ENCODE measurements at regions of chr11 and their contacts with region 1.

Region 1: DNA sequence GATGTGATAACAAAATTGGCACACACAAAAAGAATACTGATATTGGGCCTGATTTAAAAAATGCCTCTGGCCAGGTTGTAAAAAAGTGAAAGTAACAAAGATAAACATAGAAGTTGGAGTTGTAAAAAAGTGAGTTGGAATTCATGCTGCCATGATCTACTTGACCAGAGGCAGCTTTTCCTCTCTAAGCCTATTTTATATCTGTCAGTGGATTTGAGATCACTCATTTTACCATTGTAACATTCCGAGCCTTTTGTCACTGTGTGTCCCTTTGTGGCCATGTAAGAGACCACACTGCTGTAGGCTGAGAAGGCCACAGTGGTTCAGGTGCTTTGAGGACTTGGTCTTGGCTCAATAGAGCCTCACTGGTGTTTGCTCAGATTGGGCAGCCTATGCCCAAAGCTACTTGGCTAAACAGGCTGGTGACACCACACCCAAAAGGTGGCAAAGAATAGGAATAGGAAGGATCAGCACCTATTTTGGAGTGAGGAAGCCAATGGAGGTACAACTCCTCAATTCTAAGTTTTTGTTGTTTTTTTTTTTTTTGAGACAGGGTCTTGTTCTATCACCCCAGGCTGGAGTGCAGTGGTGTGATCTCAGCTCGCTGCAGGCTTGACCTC is 7.1 kb downstream of the FEN1 start:
- DNase-seq: no peak
- ATAC-seq: no peak
- H3K4me3 ChIP-seq: no peak overlapping the region
- H3K4me3 Mint-ChIP-seq: no peak overlapping the region
- H3K27ac ChIP-seq: no peak overlapping the region
- H3K27ac Mint-ChIP-seq: no peak overlapping the region
- H3K4me1 ChIP-seq: no peaks in the 10 kb centered on the region
- H3K4me1 Mint-ChIP-seq: peaks cover 6% of the 10 kb centered on the region
- H3K27me3 ChIP-seq: no peaks in the 10 kb centered on the region
- H3K27me3 Mint-ChIP-seq: no peaks in the 10 kb centered on the region
- CTCF ChIP-seq: no peak

Region 2: DNA sequence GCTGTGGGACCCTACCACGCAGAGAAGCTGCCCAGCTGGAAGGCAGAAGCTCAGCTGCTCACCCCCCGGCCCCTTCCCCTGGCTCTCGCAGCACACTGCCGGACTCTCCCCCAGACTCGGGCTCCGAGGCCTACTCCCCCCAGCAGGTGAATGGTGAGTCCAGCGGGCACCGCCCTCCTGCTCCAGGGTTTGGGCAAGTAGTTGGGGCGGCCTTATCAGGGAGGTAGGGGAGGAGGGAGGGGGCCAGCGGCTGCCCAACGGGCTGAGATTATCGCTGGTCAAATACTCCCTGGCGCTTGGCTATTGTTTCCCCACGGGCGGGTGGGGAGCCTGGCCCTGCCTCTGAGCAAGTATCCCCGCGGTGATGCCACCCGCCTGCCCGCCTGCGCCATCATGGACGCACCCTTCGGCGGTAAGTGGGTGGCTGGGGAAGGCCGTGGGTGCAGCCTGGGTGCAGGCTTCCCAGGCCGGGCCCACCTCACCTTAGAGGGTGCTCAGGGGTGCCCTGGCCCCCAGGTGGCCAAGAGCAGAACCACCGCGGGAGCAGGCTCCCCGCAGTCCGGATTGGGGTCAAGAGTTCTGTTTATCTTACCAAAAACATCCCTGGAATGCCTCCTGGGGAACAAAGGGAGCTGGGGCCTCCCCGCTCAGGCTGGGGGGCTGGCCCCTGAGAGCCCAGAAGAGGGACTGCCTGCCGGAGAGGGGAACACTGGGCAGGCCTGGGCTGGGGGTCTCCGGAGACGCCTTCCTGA is 30.4 kb before region 1 on chr11:
- CTCF ChIA-PET with region 1: no interaction called
- POLR2A ChIA-PET with region 1: no interaction called
- intact Hi-C with region 1: no loop called
- DNase-seq: no peak
- ATAC-seq: no peak
- H3K4me3 ChIP-seq: no peak overlapping the region
- H3K4me3 Mint-ChIP-seq: no peak overlapping the region
- H3K27ac ChIP-seq: no peak overlapping the region
- H3K27ac Mint-ChIP-seq: no peak overlapping the region
- H3K4me1 ChIP-seq: peaks cover 16% of the 10 kb centered on the region
- H3K4me1 Mint-ChIP-seq: no peaks in the 10 kb centered on the region
- H3K27me3 ChIP-seq: no peaks in the 10 kb centered on the region
- H3K27me3 Mint-ChIP-seq: no peaks in the 10 kb centered on the region
- CTCF ChIP-seq: no peak

Region 3: GRCh38 chr11:61891331-61892084 is 91.7 kb after region 1 on chr11 and contains the start of gene FADS3:
- CTCF ChIA-PET with region 1: interaction called, 3 read pairs
- POLR2A ChIA-PET with region 1: interaction called, 4 read pairs
- intact Hi-C with region 1: loop called (anchors 2 to 5 kb)
- DNase-seq: peak; percentile 18 to 86 (median 52)
- ATAC-seq: peak; percentile 61
- H3K4me3 ChIP-seq: peak within 1 kb of the TSS; percentile 72
- H3K4me3 Mint-ChIP-seq: peak within 1 kb of the TSS; percentile 87
- H3K27ac ChIP-seq: peak within 1 kb of the TSS in 1 of 2 donors; percentile 21
- H3K27ac Mint-ChIP-seq: no peak within 1 kb of the TSS
- H3K4me1 ChIP-seq: peaks cover 22% of the 10 kb centered on the region
- H3K4me1 Mint-ChIP-seq: peaks cover 9% of the 10 kb centered on the region
- H3K27me3 ChIP-seq: peaks cover 0 to 3% of the 10 kb centered on the region in 2 experiments
- H3K27me3 Mint-ChIP-seq: no peaks in the 10 kb centered on the region
- CTCF ChIP-seq: no peak
- total RNA-seq, gene FADS3: 6.9 TPM

Region 4: GRCh38 chr11:62309991-62310390 is 510.2 kb after region 1 on chr11:
- CTCF ChIA-PET with region 1: no interaction called
- POLR2A ChIA-PET with region 1: no interaction called
- intact Hi-C with region 1: loop called (anchors 2 to 5 kb)
- DNase-seq: peak in 1 of 14 experiments; percentile 21
- ATAC-seq: no peak
- H3K4me3 ChIP-seq: no peak overlapping the region
- H3K4me3 Mint-ChIP-seq: peak overlapping the region; percentile 13
- H3K27ac ChIP-seq: no peak overlapping the region
- H3K27ac Mint-ChIP-seq: no peak overlapping the region
- H3K4me1 ChIP-seq: peaks cover 14% of the 10 kb centered on the region
- H3K4me1 Mint-ChIP-seq: peaks cover 15% of the 10 kb centered on the region
- H3K27me3 ChIP-seq: peaks cover 5 to 20% of the 10 kb centered on the region in 2 experiments
- H3K27me3 Mint-ChIP-seq: peaks cover 65% of the 10 kb centered on the region
- CTCF ChIP-seq: no peak